ENCODE measurements at regions of chr11 and their contacts with region 1.

Region 1: GRCh38 chr11:16785520-16786128 is 47.2 kb downstream of the C11orf58 start:
- DNase-seq: peak; percentile 77 to 92
- ATAC-seq: peak; percentile 78 to 87
- H3K4me3 ChIP-seq: no peak overlapping the region
- H3K27ac ChIP-seq: no peak overlapping the region
- H3K4me1 ChIP-seq: peaks cover 15% of the 10 kb centered on the region; the same call in 2 of the 3 replicates
- CTCF ChIP-seq: peak; percentile 80
- EP300 ChIP-seq: no peak
- POLR2A ChIP-seq: no peak
- RAD21 ChIP-seq: peak; percentile 70 to 77

Region 2: DNA sequence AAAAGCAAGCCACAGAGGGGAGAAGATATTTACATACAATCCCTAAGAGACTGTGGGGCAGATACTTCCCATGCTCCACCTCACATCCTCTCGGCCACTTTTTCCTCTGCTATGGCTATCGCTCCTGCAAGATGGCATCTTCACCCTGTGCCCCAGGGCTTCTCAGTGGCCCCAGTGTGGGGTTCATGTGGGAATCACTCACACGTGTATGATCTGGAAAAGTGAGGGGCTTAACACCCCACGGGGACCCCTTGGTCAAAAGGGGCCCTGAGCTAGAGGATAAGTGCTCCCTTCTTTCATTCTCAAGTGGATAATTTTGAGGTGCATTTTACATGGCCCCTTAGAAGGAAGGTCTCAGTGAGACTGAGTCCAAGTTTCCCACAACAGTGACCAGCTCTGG is 18.5 kb before region 1 on chr11:
- CTCF ChIA-PET with region 1: interaction called, 94 read pairs
- POLR2A ChIA-PET with region 1: no interaction called
- DNase-seq: no peak
- ATAC-seq: no peak
- H3K4me3 ChIP-seq: no peak overlapping the region
- H3K27ac ChIP-seq: no peak overlapping the region
- H3K4me1 ChIP-seq: no peaks in the 10 kb centered on the region
- CTCF ChIP-seq: no peak
- EP300 ChIP-seq: no peak
- POLR2A ChIP-seq: no peak
- RAD21 ChIP-seq: no peak

Region 3: DNA sequence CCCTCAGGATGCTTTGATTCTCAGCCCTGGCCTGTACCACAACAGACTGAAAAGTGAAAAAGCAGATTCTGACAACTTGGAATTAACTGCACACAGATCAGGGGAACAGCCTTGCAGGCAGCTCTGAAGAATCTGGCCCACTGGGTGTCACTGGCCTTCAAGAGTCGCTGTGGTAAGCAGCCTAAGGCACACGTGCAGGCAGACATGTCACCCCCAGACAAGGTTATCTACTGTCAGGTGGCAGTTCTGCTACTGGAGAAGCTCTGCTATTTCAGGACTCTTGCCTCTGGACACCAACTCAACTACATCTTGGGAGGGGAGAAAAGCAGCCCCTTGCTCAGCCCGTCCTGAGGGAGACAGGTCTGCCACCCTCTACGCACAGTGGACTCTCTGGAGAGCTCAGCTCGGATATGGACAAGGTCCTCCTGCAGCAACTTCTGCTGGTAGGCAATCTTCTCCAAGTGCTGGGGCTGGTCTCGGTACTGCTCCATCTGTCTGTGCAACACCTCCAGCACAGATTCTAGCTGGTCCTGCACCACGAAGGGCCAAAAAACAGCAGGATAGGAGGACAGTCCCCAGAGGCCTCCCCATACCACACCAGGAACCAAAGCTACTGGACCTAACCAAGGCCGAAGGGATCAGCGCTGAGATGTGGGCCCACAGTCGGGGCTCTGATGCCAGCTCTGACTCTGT is 15.8 kb after region 1 on chr11:
- CTCF ChIA-PET with region 1: interaction called, 28 read pairs
- POLR2A ChIA-PET with region 1: no interaction called
- DNase-seq: no peak
- ATAC-seq: no peak
- H3K4me3 ChIP-seq: no peak overlapping the region
- H3K27ac ChIP-seq: no peak overlapping the region
- H3K4me1 ChIP-seq: peaks cover 22% of the 10 kb centered on the region
- CTCF ChIP-seq: no peak
- EP300 ChIP-seq: no peak
- POLR2A ChIP-seq: no peak
- RAD21 ChIP-seq: no peak

Region 4: DNA sequence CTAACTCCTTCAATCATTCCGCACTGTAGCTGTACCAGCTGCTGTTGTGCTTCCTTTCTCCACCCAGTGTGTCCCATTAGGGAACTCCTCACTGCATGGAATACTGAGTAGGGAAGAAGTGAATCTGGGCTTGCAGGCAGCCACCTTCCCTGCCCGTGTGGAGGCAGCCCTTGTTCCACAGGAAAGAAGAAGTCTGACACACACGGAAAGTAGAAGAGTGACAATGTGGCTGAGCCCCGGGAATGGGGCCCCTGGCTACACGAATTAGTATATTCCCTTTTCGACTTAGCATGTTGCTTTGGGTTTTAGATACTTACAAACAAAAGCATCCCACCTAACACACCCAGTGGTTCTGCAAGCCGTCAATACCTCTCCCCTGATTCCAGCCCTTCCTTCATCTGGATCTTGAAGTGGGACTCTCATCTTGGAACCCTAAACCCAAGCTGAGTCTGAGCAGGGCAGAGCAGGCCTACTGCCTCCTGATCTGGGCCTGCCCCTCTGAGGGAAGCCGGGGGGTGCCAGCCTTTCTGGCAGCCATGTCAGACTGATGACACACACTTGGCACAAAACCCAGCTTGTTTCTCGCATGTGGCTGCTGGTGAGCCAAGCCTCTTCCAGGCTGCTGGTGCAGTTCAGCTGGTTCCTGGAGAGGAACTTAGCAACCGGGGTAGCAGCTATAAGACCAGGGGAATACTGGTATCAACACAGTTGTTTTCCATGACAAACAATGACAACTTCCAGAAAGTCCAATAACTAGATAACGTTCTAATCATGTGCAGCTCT is 24.5 kb after region 1 on chr11:
- CTCF ChIA-PET with region 1: interaction called, 56 read pairs
- POLR2A ChIA-PET with region 1: no interaction called
- DNase-seq: no peak
- ATAC-seq: no peak
- H3K4me3 ChIP-seq: no peak overlapping the region
- H3K27ac ChIP-seq: no peak overlapping the region
- H3K4me1 ChIP-seq: peaks cover 16% of the 10 kb centered on the region
- CTCF ChIP-seq: no peak
- EP300 ChIP-seq: no peak
- POLR2A ChIP-seq: no peak
- RAD21 ChIP-seq: no peak

Region 5: DNA sequence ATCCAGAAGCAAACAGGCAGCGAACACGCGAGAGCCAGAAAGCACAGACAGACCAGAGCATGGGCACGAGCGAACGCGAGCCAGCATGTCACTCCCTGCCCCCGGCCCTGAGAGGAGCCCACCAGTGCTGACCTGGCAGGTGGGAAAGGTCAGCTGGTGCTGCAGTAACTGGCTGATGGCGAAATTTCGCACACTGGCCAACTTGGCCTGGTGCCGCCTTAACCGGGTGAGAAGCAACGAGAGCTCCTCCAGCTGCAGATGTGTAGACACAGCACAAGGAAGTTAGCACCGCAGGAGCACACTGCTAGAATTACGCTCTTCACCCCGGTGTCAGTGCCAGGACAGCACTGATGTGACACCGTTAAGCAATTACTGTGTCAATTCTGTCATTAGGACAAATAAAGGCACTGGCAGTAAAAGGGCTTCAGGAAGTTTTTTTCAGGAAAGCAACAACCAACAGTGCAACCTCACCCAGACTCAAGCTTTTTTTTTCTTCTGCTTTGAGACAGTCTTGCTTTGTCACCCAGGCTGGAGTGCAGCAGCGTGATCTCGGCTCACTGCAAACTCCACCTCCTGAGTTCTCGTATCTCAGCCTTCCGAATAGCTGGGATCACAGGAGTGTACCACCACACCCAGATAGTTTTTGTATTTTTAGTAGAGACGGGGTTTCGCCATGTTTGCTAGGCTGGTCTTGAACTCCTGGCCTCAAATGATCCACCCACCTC is 29.6 kb after region 1 on chr11:
- CTCF ChIA-PET with region 1: interaction called, 56 read pairs
- POLR2A ChIA-PET with region 1: no interaction called
- DNase-seq: no peak
- ATAC-seq: no peak
- H3K4me3 ChIP-seq: no peak overlapping the region
- H3K27ac ChIP-seq: no peak overlapping the region
- H3K4me1 ChIP-seq: peaks cover 17% of the 10 kb centered on the region
- CTCF ChIP-seq: no peak
- EP300 ChIP-seq: no peak
- POLR2A ChIP-seq: no peak
- RAD21 ChIP-seq: no peak

Region 6: GRCh38 chr11:16820324-16821092 is 34.9 kb after region 1 on chr11:
- CTCF ChIA-PET with region 1: interaction called, 56 read pairs
- POLR2A ChIA-PET with region 1: no interaction called
- DNase-seq: peak; percentile 77 to 82
- ATAC-seq: peak; percentile 86 to 90
- H3K4me3 ChIP-seq: no peak overlapping the region
- H3K27ac ChIP-seq: peak overlapping the region in 1 of 2 experiments; percentile 50; a peak in 2 of 6 replicates
- H3K4me1 ChIP-seq: peaks cover 29% of the 10 kb centered on the region
- CTCF ChIP-seq: peak; percentile 91
- EP300 ChIP-seq: no peak
- POLR2A ChIP-seq: no peak
- RAD21 ChIP-seq: peak; percentile 73 to 75

Region 7: GRCh38 chr11:16857186-16857585 is 71.6 kb after region 1 on chr11:
- CTCF ChIA-PET with region 1: interaction called, 23 read pairs
- POLR2A ChIA-PET with region 1: no interaction called
- DNase-seq: no peak
- ATAC-seq: no peak
- H3K4me3 ChIP-seq: no peak overlapping the region
- H3K27ac ChIP-seq: no peak overlapping the region
- H3K4me1 ChIP-seq: no peaks in the 10 kb centered on the region
- CTCF ChIP-seq: no peak
- EP300 ChIP-seq: no peak
- POLR2A ChIP-seq: no peak
- RAD21 ChIP-seq: no peak

Region 8: GRCh38 chr11:17613428-17613962 is 827.9 kb after region 1 on chr11:
- CTCF ChIA-PET with region 1: no interaction called
- POLR2A ChIA-PET with region 1: no interaction called
- DNase-seq: no peak
- ATAC-seq: no peak
- H3K4me3 ChIP-seq: no peak overlapping the region
- H3K27ac ChIP-seq: no peak overlapping the region
- H3K4me1 ChIP-seq: no peaks in the 10 kb centered on the region
- CTCF ChIP-seq: no peak
- EP300 ChIP-seq: no peak
- POLR2A ChIP-seq: no peak
- RAD21 ChIP-seq: no peak